Activated CD8-positive, alpha-beta T cell treated with anti-CD3 and anti-CD28 coated beads for 36 hours (primary cell): ENCODE measurements at regions of chr3 and their contacts with region 1.

Region 1: GRCh38 chr3:149120051-149120972 is 9.1 kb upstream of the HPS3 start:
- DNase-seq: no peak
- ATAC-seq: peak; percentile 89
- H3K4me3 Mint-ChIP-seq: no peak overlapping the region
- H3K27ac Mint-ChIP-seq: no peak overlapping the region
- H3K4me1 Mint-ChIP-seq: no peaks in the 10 kb centered on the region
- H3K27me3 Mint-ChIP-seq: peaks cover 2% of the 10 kb centered on the region
- CTCF ChIP-seq: peak; percentile 75

Region 2: DNA sequence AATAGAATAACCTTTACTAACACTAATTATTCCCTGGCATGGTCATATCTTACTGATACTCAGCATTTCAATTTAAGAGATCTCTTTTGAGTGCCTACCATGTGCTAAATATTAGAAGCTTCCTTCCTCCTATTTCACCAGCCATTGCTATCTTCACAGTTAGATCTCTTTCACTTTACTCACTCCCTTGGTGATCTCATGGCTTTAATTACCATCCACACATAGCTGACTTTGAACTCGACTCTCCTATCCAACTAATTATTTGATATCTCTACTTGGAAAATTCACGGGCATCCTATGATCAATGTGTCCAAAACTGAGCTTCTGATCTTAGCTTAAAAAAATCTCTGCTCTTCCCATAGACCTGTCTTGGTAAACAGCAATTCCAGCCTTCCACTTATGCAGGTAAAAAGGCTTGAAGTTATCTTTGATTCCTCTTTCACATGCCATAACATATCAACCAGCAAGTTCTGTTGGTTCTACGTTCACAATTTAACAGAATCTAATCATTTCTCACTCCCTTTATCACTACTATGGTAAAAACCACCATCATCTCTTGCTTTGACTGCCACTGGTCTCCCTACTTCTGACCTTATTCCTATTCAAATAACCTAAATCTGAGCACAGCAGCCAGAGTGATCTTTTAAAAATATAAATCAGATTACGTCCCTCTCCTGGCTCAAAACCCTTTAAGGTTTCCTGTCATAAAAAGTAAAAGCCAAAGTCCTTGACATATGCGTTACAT is 75.8 kb before region 1 on chr3:
- CTCF ChIA-PET with region 1: no interaction called
- POLR2A ChIA-PET with region 1: no interaction called
- intact Hi-C with region 1: no loop called
- DNase-seq: no peak
- ATAC-seq: no peak
- H3K4me3 Mint-ChIP-seq: no peak overlapping the region
- H3K27ac Mint-ChIP-seq: no peak overlapping the region
- H3K4me1 Mint-ChIP-seq: peaks cover 21% of the 10 kb centered on the region
- H3K27me3 Mint-ChIP-seq: no peaks in the 10 kb centered on the region
- CTCF ChIP-seq: no peak

Region 3: DNA sequence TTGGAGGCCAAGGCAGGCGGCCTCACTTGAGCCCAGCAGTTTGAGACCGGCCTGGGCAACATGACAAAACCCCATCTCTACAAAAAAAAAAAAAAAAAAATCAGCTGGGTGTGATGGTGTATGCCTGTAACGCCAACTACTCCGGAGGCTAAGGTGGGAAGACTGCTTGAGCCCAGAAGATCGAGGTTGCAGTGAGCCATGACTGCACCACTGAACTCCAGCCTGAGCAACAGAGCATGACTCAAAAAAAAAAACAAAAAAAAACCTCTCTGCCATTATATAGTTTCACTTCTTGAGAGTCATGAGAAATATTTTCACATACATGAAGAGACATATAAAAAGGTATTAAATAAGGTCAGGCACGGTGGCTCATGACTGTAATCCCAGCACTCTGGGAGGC is 147.3 kb after region 1 on chr3:
- CTCF ChIA-PET with region 1: interaction called, 124 read pairs
- POLR2A ChIA-PET with region 1: no interaction called
- intact Hi-C with region 1: no loop called
- DNase-seq: no peak
- ATAC-seq: no peak
- H3K4me3 Mint-ChIP-seq: no peak overlapping the region
- H3K27ac Mint-ChIP-seq: no peak overlapping the region
- H3K4me1 Mint-ChIP-seq: no peaks in the 10 kb centered on the region
- H3K27me3 Mint-ChIP-seq: no peaks in the 10 kb centered on the region
- CTCF ChIP-seq: no peak

Region 4: GRCh38 chr3:149273096-149273751 is 152.9 kb after region 1 on chr3:
- CTCF ChIA-PET with region 1: interaction called, 124 read pairs
- POLR2A ChIA-PET with region 1: no interaction called
- intact Hi-C with region 1: loop called (anchors 1 kb)
- DNase-seq: peak; percentile 27
- ATAC-seq: peak; percentile 95
- H3K4me3 Mint-ChIP-seq: no peak overlapping the region
- H3K27ac Mint-ChIP-seq: no peak overlapping the region
- H3K4me1 Mint-ChIP-seq: peaks cover 10% of the 10 kb centered on the region
- H3K27me3 Mint-ChIP-seq: no peaks in the 10 kb centered on the region
- CTCF ChIP-seq: peak; percentile 97